Calu3 (cell line): ENCODE measurements at regions of chr16 and their contacts with region 1.

Region 1: DNA sequence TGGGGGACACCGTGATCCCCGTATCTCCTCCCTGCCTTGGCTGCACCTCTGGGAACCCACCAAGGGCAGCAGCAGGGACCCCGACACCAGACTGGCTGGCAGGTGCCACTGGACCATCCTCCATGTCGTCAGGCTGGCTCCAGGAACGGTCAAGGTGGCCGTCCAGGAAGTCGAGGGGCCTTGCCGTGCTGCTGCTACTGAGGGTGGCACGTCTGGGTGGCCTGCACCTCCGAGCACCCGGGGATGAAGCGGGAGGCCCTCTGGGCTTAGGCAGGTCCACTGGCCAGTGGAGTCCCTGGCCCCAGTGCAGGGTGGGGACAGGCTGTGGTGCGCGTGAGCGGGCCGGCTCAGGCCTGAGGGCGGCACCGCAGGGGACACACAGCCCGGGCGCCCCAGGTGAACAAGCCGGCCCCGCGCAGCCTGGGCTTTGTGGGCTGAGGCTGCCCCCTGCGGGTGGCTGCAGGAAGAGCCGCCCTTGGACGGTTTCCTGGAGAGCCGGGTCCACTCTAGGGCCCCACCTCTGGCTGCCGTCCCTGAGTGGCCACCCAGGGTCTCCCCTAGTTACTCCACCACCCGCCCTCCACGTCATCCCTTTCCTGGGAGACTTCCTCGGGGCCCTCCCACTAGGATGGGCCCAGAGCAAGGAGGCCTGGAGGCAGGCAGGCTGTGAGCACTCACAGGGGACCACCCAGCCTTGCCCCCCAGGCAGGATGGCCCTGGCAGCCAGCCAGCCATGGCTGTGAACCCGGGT is 42.8 kb upstream of the ZC3H18 start:
- DNase-seq: peak; percentile 88
- H3K4me3 Mint-ChIP-seq: no peak overlapping the region
- H3K27ac Mint-ChIP-seq: no peak overlapping the region
- H3K4me1 Mint-ChIP-seq: no peaks in the 10 kb centered on the region
- H3K27me3 Mint-ChIP-seq: no peaks in the 10 kb centered on the region
- CTCF ChIP-seq: peak; percentile 98

Region 2: GRCh38 chr16:88499292-88499691 is 28.1 kb before region 1 on chr16:
- CTCF ChIA-PET with region 1: interaction called, 13 read pairs
- intact Hi-C with region 1: no loop called
- DNase-seq: no peak
- H3K4me3 Mint-ChIP-seq: no peak overlapping the region
- H3K27ac Mint-ChIP-seq: no peak overlapping the region
- H3K4me1 Mint-ChIP-seq: no peaks in the 10 kb centered on the region
- H3K27me3 Mint-ChIP-seq: no peaks in the 10 kb centered on the region
- CTCF ChIP-seq: no peak